Thyroid gland (tissue), 4 donors: ENCODE measurements at regions of chr19 and their contacts with region 1.

Region 1: DNA sequence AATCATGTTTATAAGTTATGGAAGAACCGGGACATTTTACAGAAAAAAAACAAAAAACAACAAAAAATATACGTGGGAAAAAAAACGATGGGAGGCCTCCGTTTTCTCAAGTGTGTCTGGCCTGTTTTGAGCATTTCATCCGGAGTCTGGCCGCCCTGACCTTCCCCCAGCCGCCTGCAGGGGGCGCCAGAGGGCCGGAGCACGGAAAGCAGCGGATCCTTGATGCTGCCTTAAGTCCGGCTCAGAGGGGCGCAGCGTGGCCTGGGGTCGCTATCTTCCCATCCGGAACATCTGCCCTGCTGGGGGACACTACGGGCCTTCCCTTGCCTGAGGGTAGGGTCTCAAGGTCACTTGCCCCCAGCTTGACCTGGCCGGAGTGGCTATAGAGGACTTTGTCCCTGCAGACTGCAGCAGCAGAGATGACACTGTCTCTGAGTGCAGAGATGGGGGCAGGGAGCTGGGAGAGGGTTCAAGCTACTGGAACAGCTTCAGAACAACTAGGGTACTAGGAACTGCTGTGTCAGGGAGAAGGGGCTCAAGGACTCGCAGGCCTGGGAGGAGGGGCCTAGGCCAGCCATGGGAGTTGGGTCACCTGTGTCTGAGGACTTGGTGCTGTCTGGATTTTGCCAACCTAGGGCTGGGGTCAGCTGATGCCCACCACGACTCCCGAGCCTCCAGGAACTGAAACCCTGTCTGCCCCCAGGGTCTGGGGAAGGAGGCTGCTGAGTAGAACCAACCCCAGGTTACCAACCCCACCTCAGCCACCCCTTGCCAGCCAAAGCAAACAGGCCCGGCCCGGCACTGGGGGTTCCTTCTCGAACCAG is 1.8 kb upstream of the APOE start:
- DNase-seq: peak; percentile 57 to 59
- H3K4me3 ChIP-seq: no peak overlapping the region
- H3K27ac ChIP-seq: no peak overlapping the region
- H3K4me1 ChIP-seq: peaks cover 0 to 8% of the 10 kb centered on the region in 2 donors
- H3K27me3 ChIP-seq: peaks cover 4% of the 10 kb centered on the region
- CTCF ChIP-seq: peak; percentile 81 to 99 (median 96)
- POLR2A ChIP-seq: no peak

Region 2: DNA sequence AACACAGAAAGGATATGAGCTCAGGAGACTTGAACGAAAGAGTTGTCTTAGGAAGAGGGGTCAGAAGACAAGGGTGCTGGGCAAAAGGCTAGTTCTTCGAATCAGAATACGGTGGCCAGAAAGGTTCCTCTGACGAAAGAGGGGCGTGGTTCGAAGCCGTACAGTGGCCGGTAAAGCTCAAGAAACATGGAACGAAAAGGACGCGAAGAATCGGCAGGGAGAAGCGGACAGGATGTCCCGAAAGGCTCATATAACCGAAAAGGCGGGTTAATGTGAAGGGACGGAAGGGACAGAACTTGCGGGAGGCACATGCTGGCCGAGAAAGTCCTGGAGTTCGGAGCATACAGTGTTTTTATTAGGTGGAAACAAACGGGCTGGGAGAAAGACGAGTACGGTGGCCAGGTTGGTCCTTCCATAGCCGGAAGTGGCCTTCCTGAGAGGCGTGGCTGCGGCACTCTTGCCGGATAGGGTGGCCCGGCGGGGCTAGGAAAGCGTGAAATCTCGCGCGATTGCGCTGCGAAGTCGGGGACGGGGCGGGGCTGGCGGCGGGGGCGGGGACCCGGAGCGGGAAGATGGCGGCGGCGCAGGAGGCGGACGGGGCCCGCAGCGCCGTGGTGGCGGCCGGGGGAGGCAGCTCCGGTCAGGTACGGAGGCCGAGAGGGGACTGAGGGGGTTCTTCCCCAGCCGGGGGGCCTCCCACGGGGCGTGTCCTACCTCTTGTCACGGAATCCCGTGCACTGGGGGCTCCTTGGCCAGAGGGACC is 51.2 kb after region 1 on chr19 and contains the start of gene CLPTM1:
- intact Hi-C with region 1: loop called (anchors 2 kb)
- DNase-seq: peak; percentile 96 to 97
- H3K4me3 ChIP-seq: peak within 1 kb of the TSS; percentile 56 to 98 (median 93)
- H3K27ac ChIP-seq: peak within 1 kb of the TSS; percentile 89 to 94 (median 93)
- H3K4me1 ChIP-seq: peaks cover 25 to 31% of the 10 kb centered on the region in 2 donors
- H3K27me3 ChIP-seq: no peaks in the 10 kb centered on the region
- CTCF ChIP-seq: peak in 3 of 6 experiments; percentile 17 to 40 (median 37)
- POLR2A ChIP-seq: peak in 1 of 2 donors; percentile 80
- total RNA-seq, gene CLPTM1: 65.4 to 117 (median 104) TPM